ENCODE measurements at regions of chr22 and their contacts with region 1.

Region 1: GRCh38 chr22:40950962-40951794 is at the start of gene RBX1:
- DNase-seq: peak; percentile 98
- ATAC-seq: peak; percentile 94 to 95
- H3K4me3 ChIP-seq: peak within 1 kb of the TSS; percentile 67 to 99 (median 88)
- H3K27ac ChIP-seq: peak within 1 kb of the TSS; percentile 79 to 97 (median 92)
- H3K4me1 ChIP-seq: peaks cover 24 to 30% of the 10 kb centered on the region in 2 donors
- H3K27me3 ChIP-seq: no peaks in the 10 kb centered on the region
- CTCF ChIP-seq: no peak
- POLR2A ChIP-seq: peak; percentile 72 to 77
- total RNA-seq, gene RBX1: 36.1 to 53.0 (median 46.7) TPM

Region 2: GRCh38 chr22:40363059-40363458 is 588.1 kb before region 1 on chr22:
- in situ Hi-C with region 1: no loop called
- intact Hi-C with region 1: no loop called
- DNase-seq: no peak
- ATAC-seq: no peak
- H3K4me3 ChIP-seq: no peak overlapping the region
- H3K27ac ChIP-seq: peak overlapping the region in 2 of 4 donors; percentile 17 to 18
- H3K4me1 ChIP-seq: peaks cover 3 to 11% of the 10 kb centered on the region in 2 donors
- H3K27me3 ChIP-seq: no peaks in the 10 kb centered on the region
- CTCF ChIP-seq: no peak
- POLR2A ChIP-seq: no peak

Region 3: DNA sequence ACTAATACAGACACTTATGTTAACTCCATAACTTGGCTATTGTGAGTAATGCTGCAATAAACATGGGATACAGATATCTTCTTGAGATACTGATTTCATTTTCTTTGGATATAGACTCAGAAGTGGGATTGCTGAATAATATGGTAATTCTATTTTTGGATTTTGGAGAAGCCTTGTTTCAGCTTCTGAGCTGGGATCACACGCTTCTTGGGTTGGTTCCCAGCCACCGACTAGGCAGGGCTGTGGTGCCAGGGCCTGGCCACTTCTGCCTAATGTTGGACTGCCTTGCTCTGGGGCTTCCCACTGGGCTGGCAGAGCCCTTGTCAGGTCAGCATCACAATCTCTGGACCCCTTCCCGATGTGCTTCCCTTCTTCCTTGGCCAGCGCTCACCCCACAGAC is 285.9 kb before region 1 on chr22:
- in situ Hi-C with region 1: no loop called
- intact Hi-C with region 1: no loop called
- DNase-seq: peak; percentile 16 to 33
- ATAC-seq: peak; percentile 52 to 55
- H3K4me3 ChIP-seq: no peak overlapping the region
- H3K27ac ChIP-seq: peak overlapping the region; percentile 34 to 72 (median 50)
- H3K4me1 ChIP-seq: peaks cover 11 to 20% of the 10 kb centered on the region in 2 donors
- H3K27me3 ChIP-seq: no peaks in the 10 kb centered on the region
- CTCF ChIP-seq: no peak
- POLR2A ChIP-seq: no peak

Region 4: GRCh38 chr22:40856513-40857308 is 94.5 kb before region 1 on chr22 and contains the starts of genes ST13 and XPNPEP3:
- in situ Hi-C with region 1: no loop called
- intact Hi-C with region 1: loop called (anchors 1 kb)
- DNase-seq: peak; percentile 98
- ATAC-seq: peak; percentile 96 to 97
- H3K4me3 ChIP-seq: peak within 1 kb of the TSS; percentile 79 to 98 (median 90)
- H3K27ac ChIP-seq: peak within 1 kb of the TSS; percentile 96 to 99 (median 98)
- H3K4me1 ChIP-seq: peaks cover 48 to 56% of the 10 kb centered on the region in 2 donors
- H3K27me3 ChIP-seq: no peaks in the 10 kb centered on the region
- CTCF ChIP-seq: peak in 4 of 5 experiments; percentile 18 to 55 (median 25)
- POLR2A ChIP-seq: peak; percentile 88
- total RNA-seq, gene ST13: 122 to 265 (median 197) TPM
- total RNA-seq, gene XPNPEP3: 3.6 to 12.4 (median 7.4) TPM

Region 5: DNA sequence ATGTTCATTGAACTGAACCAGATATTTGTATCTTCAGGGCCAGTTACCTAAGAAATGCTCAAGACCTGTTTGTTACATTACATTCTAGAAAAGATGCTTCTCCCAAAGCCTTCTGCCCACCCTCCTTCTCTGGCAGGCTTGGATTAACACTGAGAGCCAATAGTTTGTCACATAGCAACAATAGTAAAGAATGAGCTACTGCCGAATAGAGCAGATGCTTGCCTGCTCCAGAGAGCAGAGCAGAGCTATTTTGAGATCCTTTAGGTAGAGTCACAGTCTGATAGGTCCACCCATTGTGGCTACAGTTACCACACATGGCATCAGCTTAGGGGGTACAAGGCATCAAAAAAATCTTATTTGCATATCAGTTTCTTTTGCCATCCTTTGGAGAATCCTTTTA is 127.8 kb after region 1 on chr22:
- in situ Hi-C with region 1: loop called in 2 of 4 experiments (anchors 10 kb)
- intact Hi-C with region 1: no loop called
- DNase-seq: no peak
- ATAC-seq: no peak
- H3K4me3 ChIP-seq: no peak overlapping the region
- H3K27ac ChIP-seq: no peak overlapping the region
- H3K4me1 ChIP-seq: no peaks in the 10 kb centered on the region
- H3K27me3 ChIP-seq: no peaks in the 10 kb centered on the region
- CTCF ChIP-seq: no peak
- POLR2A ChIP-seq: no peak

Region 6: GRCh38 chr22:41091132-41092022 is 140.2 kb after region 1 on chr22:
- in situ Hi-C with region 1: loop called in 3 of 4 experiments (anchors 5 to 10 kb)
- intact Hi-C with region 1: loop called (anchors 1 kb)
- DNase-seq: peak; percentile 99
- ATAC-seq: peak; percentile 85 to 88
- H3K4me3 ChIP-seq: peak overlapping the region; percentile 76 to 97 (median 88)
- H3K27ac ChIP-seq: peak overlapping the region; percentile 98 to 100 (median 99)
- H3K4me1 ChIP-seq: peaks cover 27 to 36% of the 10 kb centered on the region in 2 donors
- H3K27me3 ChIP-seq: no peaks in the 10 kb centered on the region
- CTCF ChIP-seq: no peak
- POLR2A ChIP-seq: peak; percentile 79 to 92

Region 7: DNA sequence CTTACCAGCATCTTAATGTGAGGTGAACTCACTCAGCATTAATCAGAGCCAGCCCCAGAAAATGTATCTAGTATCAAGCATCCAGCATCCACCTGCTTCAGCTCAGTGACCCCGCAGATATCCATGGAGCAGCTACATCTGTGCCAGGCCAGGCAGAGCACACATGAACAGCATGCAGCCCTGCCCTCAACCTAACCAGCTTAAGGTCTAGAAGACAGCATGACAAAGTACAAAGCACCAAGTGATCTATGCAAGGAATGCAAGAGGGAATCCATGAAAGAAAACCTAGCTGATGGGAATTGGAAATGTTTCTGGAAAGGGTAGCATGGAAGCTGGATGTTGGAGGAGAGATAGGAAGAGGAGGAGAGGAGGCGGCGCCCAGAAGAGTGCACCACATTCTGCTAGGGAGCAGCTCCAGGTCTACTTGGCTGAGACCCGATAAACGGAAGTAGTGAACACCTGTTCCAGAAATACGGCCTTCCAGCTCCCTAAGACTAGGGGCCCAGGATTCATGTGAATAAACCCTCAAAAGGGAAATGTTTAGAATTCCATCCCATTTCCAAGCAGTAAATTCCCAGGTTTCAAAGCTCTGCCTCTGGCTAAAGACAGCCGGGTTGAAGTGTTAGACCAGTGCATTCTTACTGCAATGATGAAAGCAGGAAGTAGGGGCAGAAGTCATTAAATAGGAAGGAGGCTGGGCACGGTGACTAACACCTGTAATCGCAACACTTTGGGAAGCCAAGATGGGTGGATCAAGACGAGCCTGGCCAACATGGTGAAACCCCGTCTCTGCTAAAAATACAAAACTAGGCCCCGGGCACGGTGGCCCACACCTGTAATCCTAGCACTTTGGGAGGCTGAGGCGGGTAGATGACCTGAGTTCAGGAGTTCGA is 230.4 kb after region 1 on chr22:
- in situ Hi-C with region 1: no loop called
- intact Hi-C with region 1: loop called (anchors 5 kb)
- DNase-seq: peak in 1 of 2 donors; percentile 68
- ATAC-seq: peak; percentile 45 to 72
- H3K4me3 ChIP-seq: no peak overlapping the region
- H3K27ac ChIP-seq: peak overlapping the region; percentile 18 to 72 (median 67)
- H3K4me1 ChIP-seq: peaks cover 35% of the 10 kb centered on the region in 2 donors
- H3K27me3 ChIP-seq: no peaks in the 10 kb centered on the region
- CTCF ChIP-seq: no peak
- POLR2A ChIP-seq: no peak

Region 8: DNA sequence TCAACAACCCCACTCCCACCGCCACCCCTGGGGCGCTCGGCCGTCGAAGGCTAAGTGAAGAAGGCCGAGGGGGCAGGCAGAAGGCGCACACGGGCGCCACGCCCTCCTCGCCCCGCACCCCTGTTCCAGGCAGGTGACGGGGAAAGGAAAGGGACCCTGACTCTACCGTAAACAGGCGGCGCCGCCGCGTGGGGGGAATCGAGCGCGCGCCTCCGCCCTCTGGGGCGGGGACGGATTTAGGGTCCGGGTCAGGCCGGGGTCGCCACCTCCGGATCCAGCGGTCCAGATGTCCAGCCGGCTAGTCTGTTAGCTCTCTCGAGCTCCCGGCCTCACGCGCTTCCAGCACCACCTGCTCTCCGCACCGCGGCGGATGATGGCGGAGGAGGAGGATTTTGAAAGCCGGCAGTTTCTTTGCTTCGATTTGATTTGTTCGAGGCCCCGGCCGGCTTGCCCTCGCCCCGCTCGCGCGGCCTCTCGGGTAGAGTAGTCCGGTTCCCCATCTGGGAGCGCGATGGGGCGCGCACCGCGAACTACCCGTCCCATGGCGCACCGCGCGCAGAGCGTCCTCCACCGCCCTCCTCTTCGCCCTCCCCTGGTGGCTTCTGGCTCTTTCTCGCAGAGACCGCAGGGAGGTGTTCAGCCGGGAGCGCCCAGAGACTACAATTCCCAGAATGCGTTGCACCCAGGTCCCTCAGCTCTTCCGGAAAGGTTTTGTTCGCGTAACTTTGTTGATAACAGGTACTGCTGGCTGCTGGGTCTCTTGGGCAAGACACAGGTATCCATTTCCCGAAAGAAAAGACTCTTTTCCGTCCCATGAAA is 334.9 kb after region 1 on chr22 and contains the start of gene RANGAP1:
- in situ Hi-C with region 1: no loop called
- intact Hi-C with region 1: loop called (anchors 1 kb)
- DNase-seq: peak; percentile 97 to 98
- ATAC-seq: peak; percentile 97 to 98
- H3K4me3 ChIP-seq: peak within 1 kb of the TSS; percentile 81 to 99 (median 86)
- H3K27ac ChIP-seq: peak within 1 kb of the TSS; percentile 88 to 94 (median 91)
- H3K4me1 ChIP-seq: peaks cover 14% of the 10 kb centered on the region in 2 donors
- H3K27me3 ChIP-seq: no peaks in the 10 kb centered on the region
- CTCF ChIP-seq: peak in 2 of 5 experiments; percentile 33 to 38
- POLR2A ChIP-seq: peak; percentile 91 to 92
- total RNA-seq, gene RANGAP1: 31.4 to 75.2 (median 52.1) TPM